Common myeloid progenitor, CD34-positive (primary cell): ENCODE measurements at regions of chr13 and their contacts with region 1.

Region 1: DNA sequence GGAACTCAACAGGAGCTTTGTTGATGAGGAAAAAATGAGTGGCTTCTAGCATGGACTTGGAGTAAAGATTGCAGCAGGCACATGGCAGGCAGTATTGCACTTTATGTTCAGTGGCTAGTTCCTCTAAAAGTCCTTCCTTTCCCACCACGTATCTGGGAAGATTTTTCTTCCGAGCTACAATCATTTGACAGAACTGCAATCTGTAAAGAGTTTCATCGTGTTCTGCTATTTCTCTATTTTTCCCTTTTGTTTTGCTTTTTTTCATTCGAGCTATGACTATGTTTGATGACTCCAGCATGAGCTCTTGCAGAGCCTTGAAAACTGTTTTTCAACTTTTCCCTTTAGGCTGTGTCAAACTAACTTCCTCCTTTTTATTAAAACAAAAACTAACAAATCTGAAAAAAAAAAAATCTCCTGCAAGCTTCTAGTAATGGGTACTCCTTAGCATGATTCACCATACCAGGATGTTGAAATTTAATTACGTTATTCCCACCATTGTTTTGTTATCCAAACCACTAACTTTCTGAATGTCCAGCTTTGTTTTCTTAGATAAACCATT is 12.3 kb downstream of the CLDN10 start:
- DNase-seq: peak; percentile 39 to 84 (median 79)
- H3K4me3 ChIP-seq: peak overlapping the region in 2 of 7 experiments; percentile 35 to 38
- H3K27ac ChIP-seq: no peak overlapping the region
- H3K4me1 ChIP-seq: peaks cover 0 to 10% (median 4%) of the 10 kb centered on the region in 4 experiments
- H3K27me3 ChIP-seq: no peaks in the 10 kb centered on the region

Region 2: DNA sequence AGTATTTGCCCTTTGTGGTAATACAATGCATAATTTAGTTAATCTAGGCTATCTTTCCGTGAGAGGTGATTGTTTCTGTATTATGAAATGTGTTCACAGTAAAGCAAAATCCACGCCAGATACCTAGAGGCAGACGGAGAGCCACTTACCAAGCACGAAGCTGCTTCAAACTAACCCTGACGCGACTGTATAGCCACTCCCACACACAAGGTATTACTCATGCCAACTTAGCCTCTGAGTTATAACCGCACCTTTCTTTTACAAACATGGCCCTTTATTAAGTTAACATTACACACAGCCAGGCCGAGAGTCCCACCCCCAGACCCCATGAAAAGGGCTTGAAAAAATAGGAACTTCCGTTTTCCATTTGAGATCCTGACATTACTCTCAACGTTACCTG is 449.3 kb before region 1 on chr13:
- CTCF ChIA-PET with region 1: no interaction called
- POLR2A ChIA-PET with region 1: no interaction called
- DNase-seq: no peak
- H3K4me3 ChIP-seq: no peak overlapping the region
- H3K27ac ChIP-seq: no peak overlapping the region
- H3K4me1 ChIP-seq: peaks cover 0 to 2% (median 0%) of the 10 kb centered on the region in 4 experiments
- H3K27me3 ChIP-seq: no peaks in the 10 kb centered on the region

Region 3: GRCh38 chr13:95552539-95553441 is 12.0 kb before region 1 on chr13 and contains the start of gene CLDN10:
- CTCF ChIA-PET with region 1: interaction called, 12 read pairs
- POLR2A ChIA-PET with region 1: no interaction called
- DNase-seq: peak; percentile 72 to 89 (median 83)
- H3K4me3 ChIP-seq: peak within 1 kb of the TSS; percentile 71 to 89 (median 81)
- H3K27ac ChIP-seq: peak within 1 kb of the TSS in 1 of 2 experiments; percentile 45
- H3K4me1 ChIP-seq: peaks cover 8 to 29% (median 22%) of the 10 kb centered on the region in 4 experiments
- H3K27me3 ChIP-seq: peaks cover 0 to 34% (median 0%) of the 10 kb centered on the region in 5 experiments